ENCODE measurements at regions of chr7 and their contacts with region 1.

Region 1: DNA sequence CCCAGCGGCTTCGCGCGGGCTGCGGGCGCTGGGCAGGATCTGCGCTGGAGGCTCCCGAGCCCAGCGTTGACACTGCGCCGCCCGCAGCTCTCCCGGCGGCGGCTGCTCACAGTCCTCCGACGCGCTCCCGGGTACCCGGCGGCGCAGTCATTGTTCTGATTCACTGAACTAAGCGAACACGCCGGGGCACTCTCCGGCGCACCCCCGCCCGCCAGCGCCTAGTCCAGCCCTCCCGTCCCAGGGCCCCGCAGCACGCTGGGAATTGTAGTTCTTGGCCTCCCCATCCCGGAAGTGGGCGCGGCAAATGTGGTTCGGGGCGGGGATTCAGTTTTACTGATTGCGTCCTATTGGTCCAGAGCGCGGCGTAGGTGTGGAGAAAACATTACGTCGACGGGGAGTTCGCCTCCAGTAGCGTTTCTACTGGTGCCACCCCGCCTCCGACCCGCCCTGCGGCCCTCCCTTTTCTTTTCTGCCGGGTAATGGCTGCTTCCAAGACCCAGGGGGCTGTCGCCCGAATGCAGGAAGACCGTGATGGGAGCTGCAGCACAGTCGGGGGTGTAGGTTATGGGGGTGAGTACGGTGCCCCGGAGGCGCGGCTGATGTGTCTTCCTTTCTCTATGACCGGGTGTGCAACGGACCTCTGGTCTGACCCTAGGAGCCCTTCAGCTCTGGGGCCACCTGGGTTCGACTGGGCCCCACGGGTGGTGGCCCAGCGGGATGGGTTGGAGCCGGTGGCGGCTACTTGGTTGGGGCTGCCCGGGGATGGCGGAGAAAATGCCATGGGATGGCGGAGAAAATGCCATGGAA is at the starts of genes DOCK4 and ZNF277:
- DNase-seq: peak; percentile 98
- ATAC-seq: peak; percentile 92 to 95
- H3K4me3 ChIP-seq: peak within 1 kb of the TSS; percentile 84 to 96 (median 88)
- H3K27ac ChIP-seq: peak within 1 kb of the TSS; percentile 84 to 91 (median 87)
- H3K4me1 ChIP-seq: peaks cover 26 to 40% of the 10 kb centered on the region in 2 donors
- H3K27me3 ChIP-seq: no peaks in the 10 kb centered on the region
- CTCF ChIP-seq: no peak
- POLR2A ChIP-seq: peak; percentile 82 to 94
- total RNA-seq, gene DOCK4: 8.7 to 12.0 (median 10.2) TPM
- total RNA-seq, gene ZNF277: 12.2 to 16.5 (median 15.0) TPM

Region 2: GRCh38 chr7:112022128-112022527 is 184.3 kb before region 1 on chr7:
- in situ Hi-C with region 1: no loop called
- intact Hi-C with region 1: no loop called
- DNase-seq: no peak
- ATAC-seq: no peak
- H3K4me3 ChIP-seq: no peak overlapping the region
- H3K27ac ChIP-seq: no peak overlapping the region
- H3K4me1 ChIP-seq: peaks cover 0 to 26% of the 10 kb centered on the region in 2 donors
- H3K27me3 ChIP-seq: no peaks in the 10 kb centered on the region
- CTCF ChIP-seq: no peak
- POLR2A ChIP-seq: no peak

Region 3: DNA sequence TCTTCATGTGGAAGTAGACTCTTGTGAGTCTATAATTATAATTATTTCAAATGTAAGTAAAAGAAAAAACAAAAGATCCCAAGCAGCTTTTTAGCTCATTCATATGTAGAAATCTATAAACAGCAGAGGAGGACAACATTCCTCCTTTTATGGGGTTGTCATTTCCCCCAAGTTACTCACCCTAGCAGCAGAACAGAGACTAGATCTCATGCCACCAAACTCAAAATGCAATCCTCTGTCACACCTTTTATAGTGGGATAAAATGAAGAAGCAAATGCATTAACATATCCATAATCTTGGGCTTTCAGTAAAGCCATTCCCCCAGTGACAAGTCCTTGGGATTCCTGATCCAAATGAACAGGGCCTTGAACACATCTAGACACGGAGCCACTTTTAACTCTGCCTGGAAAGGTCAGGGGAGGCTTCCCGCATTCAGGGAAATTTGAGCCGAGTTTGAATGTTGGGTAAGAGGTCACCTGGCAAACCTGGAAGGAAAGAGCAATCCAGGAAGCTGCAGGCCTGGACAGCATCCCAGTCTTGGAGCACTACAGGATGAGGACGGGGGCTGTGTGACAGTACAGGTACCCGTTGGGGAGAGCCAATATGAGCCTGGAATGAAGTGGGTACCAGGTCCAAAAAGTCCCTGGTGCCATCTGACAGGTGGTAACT is 76.7 kb before region 1 on chr7:
- in situ Hi-C with region 1: no loop called
- intact Hi-C with region 1: loop called (anchors 2 kb)
- DNase-seq: peak; percentile 40 to 78
- ATAC-seq: peak; percentile 84 to 96
- H3K4me3 ChIP-seq: no peak overlapping the region
- H3K27ac ChIP-seq: peak overlapping the region; percentile 43 to 78 (median 66)
- H3K4me1 ChIP-seq: peaks cover 48 to 55% of the 10 kb centered on the region in 2 donors
- H3K27me3 ChIP-seq: no peaks in the 10 kb centered on the region
- CTCF ChIP-seq: no peak
- POLR2A ChIP-seq: no peak

Region 4: GRCh38 chr7:112449902-112450806 is 243.7 kb after region 1 on chr7 and contains the start of gene IFRD1:
- in situ Hi-C with region 1: loop called in 1 of 4 experiments (anchors 10 kb)
- intact Hi-C with region 1: loop called (anchors 1 kb)
- DNase-seq: peak; percentile 99
- ATAC-seq: peak; percentile 54 to 57
- H3K4me3 ChIP-seq: peak within 1 kb of the TSS; percentile 87 to 92 (median 90)
- H3K27ac ChIP-seq: peak within 1 kb of the TSS; percentile 96 to 100 (median 98)
- H3K4me1 ChIP-seq: peaks cover 32 to 48% of the 10 kb centered on the region in 2 donors
- H3K27me3 ChIP-seq: no peaks in the 10 kb centered on the region
- CTCF ChIP-seq: no peak
- POLR2A ChIP-seq: peak; percentile 100
- total RNA-seq, gene IFRD1: 37.8 to 70.8 (median 50.1) TPM

Region 5: GRCh38 chr7:112495810-112496462 is 289.5 kb after region 1 on chr7:
- in situ Hi-C with region 1: loop called in 1 of 4 experiments (anchors 25 kb)
- intact Hi-C with region 1: no loop called
- DNase-seq: peak; percentile 24 to 60
- ATAC-seq: peak; percentile 86 to 94
- H3K4me3 ChIP-seq: no peak overlapping the region
- H3K27ac ChIP-seq: no peak overlapping the region
- H3K4me1 ChIP-seq: peaks cover 0 to 4% of the 10 kb centered on the region in 2 donors
- H3K27me3 ChIP-seq: no peaks in the 10 kb centered on the region
- CTCF ChIP-seq: peak; percentile 60 to 79 (median 66)
- POLR2A ChIP-seq: no peak

Region 6: GRCh38 chr7:112939574-112940314 is 733.3 kb after region 1 on chr7:
- in situ Hi-C with region 1: no loop called
- intact Hi-C with region 1: loop called (anchors 1 kb)
- DNase-seq: peak; percentile 99
- ATAC-seq: peak; percentile 98 to 99
- H3K4me3 ChIP-seq: peak overlapping the region; percentile 85 to 90 (median 88)
- H3K27ac ChIP-seq: peak overlapping the region; percentile 81 to 88 (median 85)
- H3K4me1 ChIP-seq: peaks cover 15 to 21% of the 10 kb centered on the region in 2 donors
- H3K27me3 ChIP-seq: no peaks in the 10 kb centered on the region
- CTCF ChIP-seq: no peak
- POLR2A ChIP-seq: peak; percentile 36 to 72